T-cell (primary cell): ENCODE measurements at regions of chr2 and their contacts with region 1.

Region 1: GRCh38 chr2:197113275-197113711 is 186.8 kb upstream of the PGAP1 start:
- DNase-seq: peak in 2 of 35 experiments; percentile 15 to 68
- ATAC-seq: peak in 3 of 4 experiments; percentile 31 to 64 (median 47)
- H3K4me3 ChIP-seq: no peak overlapping the region
- H3K4me3 Mint-ChIP-seq: no peak overlapping the region
- H3K27ac ChIP-seq: peak overlapping the region; percentile 11
- H3K27ac Mint-ChIP-seq: peak overlapping the region; percentile 87 to 89
- H3K4me1 ChIP-seq: peaks cover 6 to 16% of the 10 kb centered on the region in 2 experiments
- H3K4me1 Mint-ChIP-seq: peaks cover 33 to 39% (median 35%) of the 10 kb centered on the region in 3 donors
- H3K27me3 ChIP-seq: no peaks in the 10 kb centered on the region
- H3K27me3 Mint-ChIP-seq: no peaks in the 10 kb centered on the region

Region 2: GRCh38 chr2:195850764-195851163 is 1262.5 kb before region 1 on chr2:
- CTCF ChIA-PET with region 1: no interaction called
- POLR2A ChIA-PET with region 1: no interaction called
- DNase-seq: no peak
- ATAC-seq: no peak
- H3K4me3 ChIP-seq: no peak overlapping the region
- H3K4me3 Mint-ChIP-seq: no peak overlapping the region
- H3K27ac ChIP-seq: no peak overlapping the region
- H3K27ac Mint-ChIP-seq: no peak overlapping the region
- H3K4me1 ChIP-seq: no peaks in the 10 kb centered on the region
- H3K4me1 Mint-ChIP-seq: no peaks in the 10 kb centered on the region
- H3K27me3 ChIP-seq: no peaks in the 10 kb centered on the region
- H3K27me3 Mint-ChIP-seq: no peaks in the 10 kb centered on the region

Region 3: DNA sequence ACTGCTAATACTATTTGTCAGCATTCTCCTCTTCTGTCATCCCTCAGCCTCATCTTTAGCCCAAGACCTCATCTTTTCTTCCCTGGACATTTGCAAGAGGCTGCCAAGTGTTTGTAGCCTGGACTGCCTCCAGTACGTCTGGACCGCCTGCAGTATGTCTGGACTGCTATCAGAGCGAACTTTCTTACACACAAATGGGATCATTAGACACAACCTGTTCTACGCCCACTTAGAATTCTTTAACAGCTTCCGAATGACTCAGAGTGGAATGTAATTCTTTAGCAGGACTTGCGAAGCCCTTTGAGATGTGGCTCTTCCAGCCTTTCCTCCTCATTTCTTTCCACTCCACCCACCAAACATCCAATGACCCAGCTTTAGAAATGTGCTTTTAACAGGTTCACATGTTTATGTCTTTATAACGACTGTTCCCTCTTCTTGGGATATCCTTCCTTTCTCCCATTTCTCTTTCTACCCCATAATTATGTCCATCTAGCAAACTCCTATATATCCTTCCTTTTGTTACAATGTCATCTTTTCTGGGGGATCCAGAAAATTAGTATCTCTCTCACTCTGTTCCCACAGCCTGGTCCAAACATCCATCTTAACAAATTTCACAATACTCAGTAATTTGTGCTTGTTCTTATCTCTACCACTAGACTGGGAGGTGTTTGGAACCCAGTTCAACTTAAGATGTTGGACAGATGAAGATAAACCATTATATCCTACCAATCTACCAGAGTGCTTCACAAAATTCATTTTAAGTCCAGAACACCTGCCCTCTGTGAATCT is 15.5 kb before region 1 on chr2:
- CTCF ChIA-PET with region 1: interaction called, 4 to 12 read pairs
- POLR2A ChIA-PET with region 1: interaction called in 1 of 2 experiments, 3 read pairs
- DNase-seq: no peak
- ATAC-seq: no peak
- H3K4me3 ChIP-seq: no peak overlapping the region
- H3K4me3 Mint-ChIP-seq: no peak overlapping the region
- H3K27ac ChIP-seq: no peak overlapping the region
- H3K27ac Mint-ChIP-seq: peak overlapping the region; percentile 48 to 53
- H3K4me1 ChIP-seq: no peaks in the 10 kb centered on the region
- H3K4me1 Mint-ChIP-seq: peaks cover 14 to 29% (median 29%) of the 10 kb centered on the region in 3 donors
- H3K27me3 ChIP-seq: no peaks in the 10 kb centered on the region
- H3K27me3 Mint-ChIP-seq: no peaks in the 10 kb centered on the region

Region 4: DNA sequence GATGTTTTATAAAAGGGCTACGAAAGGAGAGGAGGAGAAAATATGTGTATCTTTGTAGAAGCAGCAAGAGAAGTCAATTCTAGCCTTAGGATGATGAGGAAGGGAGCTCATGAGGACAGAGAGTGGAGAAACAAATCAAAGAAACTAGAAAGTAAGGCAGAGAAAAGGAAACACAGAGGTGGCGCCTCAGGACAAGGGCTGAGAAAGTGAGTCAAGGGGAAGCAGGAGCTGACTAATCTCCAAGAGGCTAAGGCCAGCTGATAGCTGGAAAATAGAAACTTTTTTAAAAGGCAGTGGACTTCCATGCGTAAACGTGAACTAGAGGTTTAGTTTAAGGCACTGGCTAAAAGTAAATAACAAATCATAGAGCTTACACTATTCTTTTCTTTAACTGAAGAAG is 23.9 kb after region 1 on chr2:
- CTCF ChIA-PET with region 1: interaction called, 10 to 14 read pairs
- POLR2A ChIA-PET with region 1: interaction called in 1 of 2 experiments, 4 read pairs
- DNase-seq: no peak
- ATAC-seq: no peak
- H3K4me3 ChIP-seq: no peak overlapping the region
- H3K4me3 Mint-ChIP-seq: peak overlapping the region in 2 of 3 donors; percentile 5 to 54
- H3K27ac ChIP-seq: peak overlapping the region; percentile 54
- H3K27ac Mint-ChIP-seq: peak overlapping the region; percentile 85 to 88
- H3K4me1 ChIP-seq: peaks cover 53 to 61% of the 10 kb centered on the region in 2 experiments
- H3K4me1 Mint-ChIP-seq: peaks cover 90 to 98% (median 97%) of the 10 kb centered on the region in 3 donors
- H3K27me3 ChIP-seq: no peaks in the 10 kb centered on the region
- H3K27me3 Mint-ChIP-seq: no peaks in the 10 kb centered on the region

Region 5: GRCh38 chr2:197152451-197153228 is 39.3 kb after region 1 on chr2:
- CTCF ChIA-PET with region 1: interaction called, 12 read pairs
- POLR2A ChIA-PET with region 1: interaction called in 1 of 2 experiments, 4 read pairs
- DNase-seq: peak in 30 of 35 experiments; percentile 10 to 62 (median 33)
- ATAC-seq: peak; percentile 91 to 96 (median 92)
- H3K4me3 ChIP-seq: peak overlapping the region in 1 of 2 donors; percentile 23
- H3K4me3 Mint-ChIP-seq: peak overlapping the region; percentile 28 to 76 (median 52)
- H3K27ac ChIP-seq: peak overlapping the region; percentile 48
- H3K27ac Mint-ChIP-seq: peak overlapping the region; percentile 90 to 95
- H3K4me1 ChIP-seq: peaks cover 34 to 38% of the 10 kb centered on the region in 2 experiments
- H3K4me1 Mint-ChIP-seq: peaks cover 84 to 87% (median 86%) of the 10 kb centered on the region in 3 donors
- H3K27me3 ChIP-seq: no peaks in the 10 kb centered on the region
- H3K27me3 Mint-ChIP-seq: no peaks in the 10 kb centered on the region

Region 6: DNA sequence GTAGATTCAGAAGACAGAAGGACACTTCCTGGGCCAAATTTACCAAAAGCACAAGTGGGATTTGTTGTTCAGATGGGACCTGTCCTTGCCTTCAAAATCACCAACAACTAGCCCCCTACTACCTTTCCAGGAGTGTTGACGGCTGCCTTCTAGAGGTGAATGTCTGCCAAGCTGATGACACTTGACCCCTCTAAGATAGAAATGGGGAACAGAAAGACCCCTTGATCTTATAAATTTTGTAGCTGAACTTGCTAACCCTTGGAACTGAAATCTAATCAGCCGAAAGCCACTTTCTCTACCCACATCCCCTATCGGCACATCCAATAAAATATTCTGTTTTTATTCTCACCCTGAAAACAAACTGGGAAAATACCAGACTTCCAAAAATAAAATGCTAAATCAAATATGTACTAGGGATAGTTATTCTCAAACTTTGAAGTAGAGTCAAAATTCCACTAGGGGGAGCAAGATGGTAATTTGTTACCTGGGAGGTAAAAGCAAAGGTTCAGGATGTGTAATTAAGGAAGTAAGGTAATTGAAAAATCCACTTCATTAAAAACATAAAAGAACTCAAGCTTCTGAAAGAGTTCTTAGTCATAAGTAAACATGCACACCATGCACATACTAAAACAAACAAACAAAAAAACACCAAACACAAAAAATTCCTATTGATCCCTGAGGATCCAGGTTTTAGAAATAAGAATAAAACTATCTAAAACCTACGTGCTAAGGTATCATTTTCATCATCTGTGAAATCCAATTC is 78.1 kb after region 1 on chr2:
- CTCF ChIA-PET with region 1: interaction called, 18 to 42 read pairs
- POLR2A ChIA-PET with region 1: no interaction called
- DNase-seq: peak in 1 of 35 experiments; percentile 84
- ATAC-seq: peak; percentile 51 to 63 (median 56)
- H3K4me3 ChIP-seq: no peak overlapping the region
- H3K4me3 Mint-ChIP-seq: peak overlapping the region in 2 of 3 donors; percentile 7 to 51
- H3K27ac ChIP-seq: peak overlapping the region; percentile 79
- H3K27ac Mint-ChIP-seq: peak overlapping the region; percentile 78 to 86
- H3K4me1 ChIP-seq: peaks cover 35 to 61% of the 10 kb centered on the region in 2 experiments
- H3K4me1 Mint-ChIP-seq: peaks cover 83 to 88% (median 87%) of the 10 kb centered on the region in 3 donors
- H3K27me3 ChIP-seq: no peaks in the 10 kb centered on the region
- H3K27me3 Mint-ChIP-seq: no peaks in the 10 kb centered on the region

Region 7: DNA sequence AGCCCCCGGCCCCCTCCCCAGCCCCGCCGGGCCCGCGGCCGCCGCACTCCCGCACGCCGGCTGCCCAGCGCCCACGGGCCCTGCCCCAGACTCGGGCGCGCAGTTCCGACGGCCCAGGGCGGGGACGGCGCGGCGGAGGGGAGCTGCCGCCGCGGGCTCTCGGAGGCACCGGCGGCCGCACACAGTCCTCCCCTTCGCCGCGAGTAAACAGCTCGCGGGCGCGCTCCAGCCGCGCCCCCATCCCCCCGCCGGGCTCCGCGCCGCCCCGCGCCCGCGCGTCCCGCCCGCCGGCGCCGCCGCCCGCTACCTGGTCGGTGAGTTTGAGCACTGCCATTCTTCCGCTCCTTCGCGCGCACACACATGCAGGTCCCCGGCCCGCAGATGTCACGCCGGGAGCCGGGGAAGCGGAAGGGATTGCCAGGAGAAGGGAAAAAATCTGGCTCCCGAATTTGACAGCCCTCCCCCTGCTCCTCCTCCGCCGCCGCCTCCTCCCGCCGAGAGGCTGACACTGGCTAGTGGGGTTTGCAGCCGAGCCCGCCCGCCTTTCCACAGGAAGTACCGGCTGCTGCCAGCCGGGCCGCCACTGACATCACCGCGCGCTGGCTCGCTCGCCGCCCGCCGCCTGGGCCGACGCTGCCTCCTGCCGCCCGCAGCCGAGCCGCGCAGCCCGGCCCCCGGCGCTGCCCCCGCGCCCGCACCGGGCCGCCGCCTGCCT is 197.1 kb after region 1 on chr2 and contains the start of gene ANKRD44:
- CTCF ChIA-PET with region 1: interaction called, 5 to 19 read pairs
- POLR2A ChIA-PET with region 1: interaction called in 1 of 2 experiments, 6 read pairs
- DNase-seq: peak; percentile 78 to 94 (median 87)
- ATAC-seq: peak; percentile 73 to 85 (median 77)
- H3K4me3 ChIP-seq: peak within 1 kb of the TSS; percentile 84 to 99
- H3K4me3 Mint-ChIP-seq: peak within 1 kb of the TSS; percentile 92 to 95 (median 92)
- H3K27ac ChIP-seq: peak within 1 kb of the TSS; percentile 83
- H3K27ac Mint-ChIP-seq: peak within 1 kb of the TSS; percentile 99
- H3K4me1 ChIP-seq: peaks cover 34 to 39% of the 10 kb centered on the region in 2 experiments
- H3K4me1 Mint-ChIP-seq: peaks cover 65 to 83% (median 74%) of the 10 kb centered on the region in 3 donors
- H3K27me3 ChIP-seq: no peaks in the 10 kb centered on the region
- H3K27me3 Mint-ChIP-seq: no peaks in the 10 kb centered on the region
- total RNA-seq, gene ANKRD44: 225 to 333 (median 238) TPM

Region 8: GRCh38 chr2:197383823-197384222 is 270.5 kb after region 1 on chr2:
- CTCF ChIA-PET with region 1: interaction called, 20 to 28 read pairs
- POLR2A ChIA-PET with region 1: no interaction called
- DNase-seq: no peak
- ATAC-seq: peak in 1 of 4 experiments; percentile 28
- H3K4me3 ChIP-seq: no peak overlapping the region
- H3K4me3 Mint-ChIP-seq: no peak overlapping the region
- H3K27ac ChIP-seq: no peak overlapping the region
- H3K27ac Mint-ChIP-seq: no peak overlapping the region
- H3K4me1 ChIP-seq: no peaks in the 10 kb centered on the region
- H3K4me1 Mint-ChIP-seq: peaks cover 7 to 17% (median 8%) of the 10 kb centered on the region in 3 donors
- H3K27me3 ChIP-seq: peaks cover 0 to 1% of the 10 kb centered on the region in 2 experiments
- H3K27me3 Mint-ChIP-seq: no peaks in the 10 kb centered on the region

Region 9: DNA sequence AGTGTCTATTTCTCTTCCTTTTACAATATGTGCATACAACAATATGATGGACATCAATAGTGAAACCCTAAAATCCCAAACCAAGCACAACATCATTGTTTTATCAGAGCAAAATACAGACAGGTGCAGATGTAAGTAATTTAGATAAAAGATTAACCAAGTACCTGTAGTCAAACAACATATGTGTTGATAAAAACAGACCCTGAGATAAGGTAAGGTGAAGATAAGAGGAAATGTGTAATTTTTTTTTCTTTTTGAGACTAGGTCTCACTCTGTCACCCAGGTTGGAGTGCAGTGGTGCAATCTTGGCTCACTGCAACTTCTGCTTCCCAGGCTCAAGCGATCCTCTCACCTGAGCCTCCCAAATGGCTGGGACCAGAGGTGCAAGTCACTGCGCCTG is 1280.9 kb after region 1 on chr2:
- CTCF ChIA-PET with region 1: no interaction called
- POLR2A ChIA-PET with region 1: no interaction called
- DNase-seq: no peak
- ATAC-seq: no peak
- H3K4me3 ChIP-seq: no peak overlapping the region
- H3K4me3 Mint-ChIP-seq: no peak overlapping the region
- H3K27ac ChIP-seq: no peak overlapping the region
- H3K27ac Mint-ChIP-seq: no peak overlapping the region
- H3K4me1 ChIP-seq: no peaks in the 10 kb centered on the region
- H3K4me1 Mint-ChIP-seq: no peaks in the 10 kb centered on the region
- H3K27me3 ChIP-seq: peaks cover 2 to 3% of the 10 kb centered on the region in 2 experiments
- H3K27me3 Mint-ChIP-seq: peaks cover 17 to 26% of the 10 kb centered on the region in 2 donors